AG04450 (cell line): ENCODE measurements at regions of chr5 and their contacts with region 1.

Region 1: DNA sequence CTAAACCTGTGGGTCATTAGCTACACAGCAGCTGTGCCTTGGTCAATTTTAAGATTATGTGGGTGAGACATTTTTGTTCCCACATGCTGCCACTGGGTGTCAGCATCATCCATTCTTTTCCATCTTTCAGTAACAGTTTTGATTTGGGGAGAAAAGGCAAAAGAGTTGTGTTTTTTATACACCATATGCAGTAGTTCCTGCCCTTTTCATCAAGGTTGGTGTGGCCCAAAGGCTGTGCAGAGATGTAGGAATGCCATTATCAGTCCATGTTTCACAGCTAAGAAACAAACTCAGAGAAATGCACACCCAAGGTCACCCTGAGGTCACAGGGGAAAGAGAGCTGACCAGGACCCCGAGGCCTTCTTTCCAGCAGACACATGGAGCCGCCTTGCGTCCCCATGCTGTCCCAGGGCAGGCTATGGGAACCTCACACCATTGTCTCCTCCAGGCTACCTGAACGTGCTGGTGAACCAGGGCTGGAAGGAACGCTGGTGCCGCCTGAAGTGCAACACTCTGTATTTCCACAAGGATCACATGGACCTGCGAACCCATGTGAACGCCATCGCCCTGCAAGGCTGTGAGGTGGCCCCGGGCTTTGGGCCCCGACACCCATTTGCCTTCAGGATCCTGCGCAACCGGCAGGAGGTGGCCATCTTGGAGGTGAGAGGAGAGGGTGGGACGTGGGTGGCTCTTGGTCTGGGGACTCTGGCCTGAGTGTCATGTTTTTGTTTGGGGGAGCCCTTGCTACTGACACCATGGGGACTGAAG is 27.8 kb upstream of the GRPEL2 start:
- DNase-seq: peak; percentile 33
- H3K4me3 ChIP-seq: no peak overlapping the region
- H3K27ac ChIP-seq: no peak overlapping the region
- H3K27me3 ChIP-seq: no peaks in the 10 kb centered on the region
- CTCF ChIP-seq: peak; percentile 75

Region 2: GRCh38 chr5:148922606-148923005 is 394.9 kb before region 1 on chr5:
- CTCF ChIA-PET with region 1: no interaction called
- POLR2A ChIA-PET with region 1: no interaction called
- DNase-seq: no peak
- H3K4me3 ChIP-seq: no peak overlapping the region
- H3K27ac ChIP-seq: no peak overlapping the region
- H3K27me3 ChIP-seq: no peaks in the 10 kb centered on the region
- CTCF ChIP-seq: no peak

Region 3: GRCh38 chr5:149345147-149345875 is 27.8 kb after region 1 on chr5 and contains the start of gene GRPEL2:
- CTCF ChIA-PET with region 1: interaction called, 12 read pairs
- POLR2A ChIA-PET with region 1: interaction called, 5 read pairs
- DNase-seq: peak; percentile 94
- H3K4me3 ChIP-seq: peak within 1 kb of the TSS; percentile 98
- H3K27ac ChIP-seq: peak within 1 kb of the TSS; percentile 88
- H3K27me3 ChIP-seq: no peaks in the 10 kb centered on the region
- CTCF ChIP-seq: 0 out of 2 replicates have a peak, but pooled peaks have one; percentile 5
- polyA plus RNA-seq, gene GRPEL2: 15.0 and 21.6 TPM in 2 replicates